B cell (primary cell): ENCODE measurements at regions of chr14 and their contacts with region 1.

Region 1: GRCh38 chr14:60734465-60735242 is at the start of gene MNAT1:
- DNase-seq: peak; percentile 86
- ATAC-seq: peak; percentile 93
- H3K4me3 ChIP-seq: peak within 1 kb of the TSS; percentile 69 to 99 (median 95)
- H3K4me3 Mint-ChIP-seq: peak within 1 kb of the TSS; percentile 98
- H3K27ac ChIP-seq: peak within 1 kb of the TSS; percentile 42 to 81
- H3K27ac Mint-ChIP-seq: peak within 1 kb of the TSS; percentile 81
- H3K4me1 ChIP-seq: peaks cover 9 to 14% of the 10 kb centered on the region in 2 donors
- H3K4me1 Mint-ChIP-seq: peaks cover 20% of the 10 kb centered on the region
- H3K27me3 ChIP-seq: peaks cover 0 to 24% (median 11%) of the 10 kb centered on the region in 4 experiments
- H3K27me3 Mint-ChIP-seq: peaks cover 23% of the 10 kb centered on the region
- CTCF ChIP-seq: no peak
- total RNA-seq, gene MNAT1: 23.7 and 28.2 TPM in 2 replicates

Region 2: DNA sequence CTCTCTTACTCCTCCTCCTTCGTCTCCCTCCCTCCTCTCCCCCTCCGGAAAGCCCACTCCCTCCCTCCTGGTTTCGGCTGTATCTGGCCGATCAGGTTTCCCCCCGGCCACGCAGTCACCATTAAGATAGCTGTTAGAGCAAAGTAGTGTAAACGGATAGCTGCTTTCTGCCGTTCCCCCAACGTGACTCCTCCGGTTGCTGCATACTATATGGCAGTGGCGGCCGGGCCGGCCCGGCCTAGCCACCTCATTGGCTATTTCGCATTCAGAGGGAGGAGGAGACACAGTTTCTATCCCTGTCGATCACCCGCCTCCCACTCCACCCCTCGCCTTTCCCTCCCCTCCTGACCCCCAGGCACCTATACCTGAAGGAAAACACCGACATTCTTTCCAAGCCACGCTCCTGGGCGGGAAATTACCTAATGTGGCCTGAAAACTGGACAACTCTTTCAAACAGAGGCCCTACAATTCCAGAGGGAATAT is 10.5 kb before region 1 on chr14 and contains the start of gene SIX4:
- CTCF ChIA-PET with region 1: interaction called, 3 read pairs
- POLR2A ChIA-PET with region 1: no interaction called
- intact Hi-C with region 1: loop called (anchors 1 kb)
- DNase-seq: peak; percentile 53
- ATAC-seq: peak; percentile 21
- H3K4me3 ChIP-seq: peak within 1 kb of the TSS; percentile 46 to 87 (median 56)
- H3K4me3 Mint-ChIP-seq: peak within 1 kb of the TSS; percentile 94
- H3K27ac ChIP-seq: no peak within 1 kb of the TSS
- H3K27ac Mint-ChIP-seq: no peak within 1 kb of the TSS
- H3K4me1 ChIP-seq: peaks cover 32 to 35% of the 10 kb centered on the region in 2 donors
- H3K4me1 Mint-ChIP-seq: peaks cover 22% of the 10 kb centered on the region
- H3K27me3 ChIP-seq: peaks cover 0 to 79% (median 65%) of the 10 kb centered on the region in 4 experiments
- H3K27me3 Mint-ChIP-seq: peaks cover 75% of the 10 kb centered on the region
- CTCF ChIP-seq: no peak
- total RNA-seq, gene SIX4: not detected in 2 replicates

Region 3: DNA sequence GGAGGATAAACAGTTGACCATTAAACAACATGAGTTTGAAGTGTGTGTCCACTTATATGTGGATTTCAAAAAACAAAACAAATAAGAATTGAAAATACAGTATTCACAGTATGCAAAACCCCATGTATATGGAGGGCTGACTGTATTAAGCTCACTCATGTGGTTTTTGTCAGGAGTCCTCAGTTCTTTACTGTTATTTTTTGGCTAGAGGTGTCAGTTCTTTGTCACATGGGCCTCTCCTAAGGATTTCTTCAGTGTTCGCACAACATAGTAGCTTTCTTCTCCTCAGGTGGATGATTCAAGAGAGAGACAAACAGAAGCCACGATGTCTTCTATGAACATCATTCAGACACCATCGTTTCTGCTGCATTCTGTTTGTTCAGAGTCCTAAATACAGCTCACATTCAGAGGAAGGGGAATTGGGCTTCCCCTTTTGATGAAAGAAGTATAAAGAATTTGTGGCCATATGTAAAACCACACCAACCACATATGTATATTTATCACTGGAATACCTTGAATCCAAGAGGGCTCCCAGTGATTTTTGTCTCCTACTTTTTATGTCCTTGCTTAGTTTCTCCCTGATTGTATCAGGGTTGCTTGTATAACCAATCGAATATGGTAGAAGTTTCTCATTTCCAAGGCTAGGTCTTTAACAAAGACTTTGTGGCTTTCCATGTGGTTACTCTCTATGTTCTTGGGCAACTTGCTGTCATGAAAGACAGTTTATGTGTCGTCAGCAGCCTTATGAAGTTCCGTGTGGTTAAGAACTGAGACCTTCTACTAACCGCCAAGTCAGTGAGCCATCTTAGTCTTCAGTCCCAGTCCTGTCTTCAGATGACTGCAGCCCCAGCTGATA is 18.8 kb after region 1 on chr14:
- CTCF ChIA-PET with region 1: no interaction called
- POLR2A ChIA-PET with region 1: no interaction called
- intact Hi-C with region 1: loop called (anchors 2 kb)
- DNase-seq: peak; percentile 81
- ATAC-seq: peak; percentile 88
- H3K4me3 ChIP-seq: no peak overlapping the region
- H3K4me3 Mint-ChIP-seq: peak overlapping the region; percentile 30
- H3K27ac ChIP-seq: peak overlapping the region in 1 of 2 donors; percentile 11
- H3K27ac Mint-ChIP-seq: peak overlapping the region; percentile 79
- H3K4me1 ChIP-seq: peaks cover 23 to 31% of the 10 kb centered on the region in 2 donors
- H3K4me1 Mint-ChIP-seq: peaks cover 34% of the 10 kb centered on the region
- H3K27me3 ChIP-seq: peaks cover 0 to 2% (median 0%) of the 10 kb centered on the region in 4 experiments
- H3K27me3 Mint-ChIP-seq: no peaks in the 10 kb centered on the region
- CTCF ChIP-seq: no peak

Region 4: GRCh38 chr14:60893911-60894310 is 159.3 kb after region 1 on chr14:
- CTCF ChIA-PET with region 1: no interaction called
- POLR2A ChIA-PET with region 1: no interaction called
- intact Hi-C with region 1: no loop called
- DNase-seq: no peak
- ATAC-seq: no peak
- H3K4me3 ChIP-seq: no peak overlapping the region
- H3K4me3 Mint-ChIP-seq: no peak overlapping the region
- H3K27ac ChIP-seq: no peak overlapping the region
- H3K27ac Mint-ChIP-seq: no peak overlapping the region
- H3K4me1 ChIP-seq: no peaks in the 10 kb centered on the region
- H3K4me1 Mint-ChIP-seq: peaks cover 15% of the 10 kb centered on the region
- H3K27me3 ChIP-seq: no peaks in the 10 kb centered on the region
- H3K27me3 Mint-ChIP-seq: no peaks in the 10 kb centered on the region
- CTCF ChIP-seq: no peak

Region 5: DNA sequence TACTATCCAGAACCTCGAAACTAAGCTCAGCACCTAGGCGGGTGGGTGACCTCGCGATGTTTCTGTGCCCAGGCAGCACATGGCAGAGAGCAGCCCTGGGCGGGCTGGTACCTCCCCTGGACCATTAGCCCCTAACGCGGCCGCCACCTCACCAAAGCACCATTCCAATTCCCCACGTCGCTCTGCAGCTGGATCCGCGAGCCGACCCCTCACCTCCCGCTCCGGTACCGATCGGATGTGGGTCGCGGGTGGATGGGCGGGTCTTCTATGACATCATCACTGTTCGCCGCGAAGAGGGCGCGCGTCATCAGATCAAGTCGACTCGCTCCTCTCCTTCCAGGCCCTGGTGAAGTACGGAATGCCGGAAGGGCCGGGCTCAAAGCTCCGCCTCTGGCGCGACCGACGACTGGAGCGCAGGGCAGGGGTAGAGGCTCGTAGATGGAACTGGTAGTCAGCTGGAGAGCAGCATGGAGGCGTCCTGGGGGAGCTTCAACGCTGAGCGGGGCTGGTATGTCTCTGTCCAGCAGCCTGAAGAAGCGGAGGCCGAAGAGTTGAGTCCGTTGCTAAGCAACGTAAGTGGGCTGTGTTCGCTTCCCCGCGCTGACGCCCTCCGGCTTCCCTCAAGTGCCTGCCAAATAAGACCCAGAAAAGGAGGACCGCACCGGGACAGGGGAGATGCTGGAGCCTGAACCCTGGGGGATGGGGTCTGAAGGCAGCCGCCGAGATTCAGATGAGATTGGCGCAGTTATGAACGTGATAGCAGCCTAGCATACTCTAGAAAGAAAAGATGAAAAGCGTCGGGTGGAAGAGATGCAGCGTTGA is 246.4 kb after region 1 on chr14 and contains the starts of genes SLC38A6 and TRMT5:
- CTCF ChIA-PET with region 1: no interaction called
- POLR2A ChIA-PET with region 1: no interaction called
- intact Hi-C with region 1: loop called (anchors 2 kb)
- DNase-seq: peak; percentile 95
- ATAC-seq: peak; percentile 84
- H3K4me3 ChIP-seq: peak within 1 kb of the TSS; percentile 86 to 97 (median 90)
- H3K4me3 Mint-ChIP-seq: no peak within 1 kb of the TSS
- H3K27ac ChIP-seq: peak within 1 kb of the TSS; percentile 69 to 77
- H3K27ac Mint-ChIP-seq: no peak within 1 kb of the TSS
- H3K4me1 ChIP-seq: peaks cover 15 to 18% of the 10 kb centered on the region in 2 donors
- H3K4me1 Mint-ChIP-seq: peaks cover 16% of the 10 kb centered on the region
- H3K27me3 ChIP-seq: no peaks in the 10 kb centered on the region
- H3K27me3 Mint-ChIP-seq: no peaks in the 10 kb centered on the region
- CTCF ChIP-seq: no peak
- total RNA-seq, gene SLC38A6: 14.5 and 15.9 TPM in 2 replicates
- total RNA-seq, gene TRMT5: 6.1 and 8.7 TPM in 2 replicates